Head of caudate nucleus (tissue), 42 donors: ENCODE measurements at regions of chr11 and their contacts with region 1.

Region 1: GRCh38 chr11:110092515-110093404 is at the start of gene ZC3H12C:
- DNase-seq: peak; percentile 47 to 92 (median 84)

Region 2: GRCh38 chr11:109946322-109946846 is 146.4 kb before region 1 on chr11:
- intact Hi-C with region 1: loop called (anchors 10 kb)
- DNase-seq: peak; percentile 77 to 96 (median 89)

Region 3: DNA sequence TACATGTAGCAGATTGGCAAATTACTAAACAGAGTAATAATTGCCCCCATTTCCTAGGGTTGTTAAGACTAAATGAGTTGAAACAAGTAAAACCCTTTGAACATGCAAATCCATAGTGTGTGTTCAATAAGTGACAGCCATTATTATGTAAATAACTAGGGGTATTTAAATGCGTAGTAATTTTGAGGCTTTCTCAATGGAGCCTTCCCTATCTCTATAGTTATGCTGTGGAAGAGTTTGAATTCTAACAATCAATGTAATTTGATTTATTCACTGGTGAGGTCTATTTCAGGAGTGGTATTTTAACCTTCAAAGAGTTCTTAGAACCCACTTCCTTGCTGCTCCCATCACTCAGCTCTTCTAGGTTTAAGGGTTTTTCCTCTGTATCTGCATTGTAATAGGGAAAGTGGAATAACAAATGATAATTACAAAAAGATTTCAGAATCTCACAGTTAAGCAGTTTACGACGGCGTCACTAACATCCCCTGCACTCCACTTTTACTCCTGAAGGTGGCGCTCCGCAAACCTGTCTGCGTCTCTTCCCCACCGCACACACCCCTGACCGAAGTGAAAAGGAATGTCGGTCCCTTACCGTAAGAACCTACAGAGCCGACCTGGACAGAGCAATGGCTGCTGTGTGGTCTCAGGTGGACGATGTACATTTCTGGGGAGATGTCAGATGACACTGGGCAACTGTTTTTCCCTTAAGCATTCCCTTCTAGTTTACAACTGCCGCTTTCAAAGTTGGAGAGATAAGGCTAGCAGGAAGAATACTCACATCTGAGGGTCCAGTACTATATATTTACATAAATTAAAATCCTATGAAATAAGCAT is 81.3 kb after region 1 on chr11:
- intact Hi-C with region 1: loop called (anchors 10 kb)
- DNase-seq: peak; percentile 41 to 92 (median 78)